BJ (cell line): ENCODE measurements at regions of chr7 and their contacts with region 1.

Region 1: DNA sequence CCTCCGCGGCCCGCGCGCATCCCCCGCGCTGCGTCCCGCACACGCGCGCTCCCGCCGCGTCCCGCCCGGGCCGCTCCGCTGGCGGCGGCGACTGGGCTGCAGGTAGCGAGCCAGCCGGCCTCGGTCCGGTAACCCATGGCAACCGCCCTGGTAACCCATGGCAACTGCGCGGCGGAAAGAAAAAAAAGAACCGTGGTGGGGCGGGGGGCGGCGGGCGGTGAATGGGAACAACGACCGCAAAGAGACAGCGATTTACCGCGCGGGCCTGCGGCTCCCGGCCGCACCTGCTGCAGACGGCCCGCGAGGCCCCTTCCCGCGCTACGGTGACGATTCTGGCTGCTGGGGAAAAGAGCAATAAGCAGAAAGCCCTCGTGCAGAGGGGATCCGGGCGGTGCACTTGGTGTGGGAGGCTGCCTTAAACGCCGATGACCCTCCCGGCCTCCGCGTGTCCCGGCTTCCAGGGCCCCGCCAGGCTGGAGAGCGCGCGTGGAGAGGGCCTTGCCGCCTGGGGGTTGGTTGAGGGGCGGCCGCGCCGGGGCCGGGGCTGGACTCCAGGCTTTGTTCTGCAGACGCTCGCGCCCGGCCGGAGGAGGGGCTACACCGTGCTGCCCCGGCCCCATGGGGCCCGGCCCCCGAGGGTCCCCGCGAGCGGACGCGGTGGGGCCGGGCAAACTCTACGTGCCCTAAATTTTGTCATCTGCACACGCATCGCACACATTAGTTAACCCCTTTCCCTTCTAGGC is 84.7 kb downstream of the SNX10 start:
- DNase-seq: no peak
- H3K4me3 ChIP-seq: no peak overlapping the region
- H3K27me3 ChIP-seq: peaks cover 16% of the 10 kb centered on the region
- CTCF ChIP-seq: no peak

Region 2: GRCh38 chr7:26318921-26319320 is 57.4 kb before region 1 on chr7:
- CTCF ChIA-PET with region 1: no interaction called
- POLR2A ChIA-PET with region 1: no interaction called
- DNase-seq: no peak
- H3K4me3 ChIP-seq: no peak overlapping the region
- H3K27me3 ChIP-seq: no peaks in the 10 kb centered on the region
- CTCF ChIP-seq: no peak

Region 3: DNA sequence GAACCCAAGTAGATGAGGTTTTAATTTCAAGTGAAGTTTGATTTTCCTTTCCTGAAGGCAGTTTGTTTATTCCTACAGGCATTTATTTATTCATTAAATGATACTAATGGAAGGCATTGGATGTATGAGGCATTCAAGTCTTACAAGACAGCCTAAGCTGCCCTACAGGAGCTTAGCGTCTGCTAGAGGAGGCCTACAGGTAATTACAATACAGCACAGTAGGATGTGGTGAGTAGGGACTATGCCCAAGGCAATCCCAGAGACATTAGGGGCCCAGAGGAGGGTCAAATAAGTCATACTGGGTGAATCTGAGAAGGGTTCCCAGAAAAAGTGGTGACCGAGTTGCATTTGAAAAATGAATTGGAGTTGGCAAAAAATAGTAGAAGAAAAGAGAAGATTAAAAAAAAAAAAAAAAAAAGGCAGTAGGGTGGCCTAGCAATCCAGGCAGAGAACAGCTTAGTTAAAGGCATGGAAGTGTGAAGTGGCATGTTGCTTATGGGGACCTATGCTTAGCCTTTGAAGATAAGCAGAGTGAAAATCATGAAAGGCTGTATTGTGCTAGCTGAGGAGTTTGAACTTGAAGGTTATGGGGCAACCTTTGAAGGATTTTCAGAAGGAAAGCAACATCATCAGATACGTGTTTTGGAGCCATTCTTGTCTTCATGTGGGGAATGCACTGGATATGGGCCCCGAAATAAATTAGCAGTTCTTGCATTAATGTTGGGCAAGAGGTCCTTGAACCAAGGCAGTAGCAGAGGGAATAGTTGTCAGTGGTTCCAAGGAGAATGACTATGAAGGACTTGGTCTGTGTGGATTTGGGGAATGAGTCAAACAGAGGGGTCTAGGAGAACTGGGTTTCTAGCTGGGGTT is 19.2 kb before region 1 on chr7:
- CTCF ChIA-PET with region 1: no interaction called
- POLR2A ChIA-PET with region 1: no interaction called
- DNase-seq: no peak
- H3K4me3 ChIP-seq: no peak overlapping the region
- H3K27me3 ChIP-seq: no peaks in the 10 kb centered on the region
- CTCF ChIP-seq: no peak

Region 4: GRCh38 chr7:26667500-26668133 is 291.3 kb after region 1 on chr7:
- CTCF ChIA-PET with region 1: interaction called, 55 read pairs
- POLR2A ChIA-PET with region 1: no interaction called
- DNase-seq: peak; percentile 66
- H3K4me3 ChIP-seq: no peak overlapping the region
- H3K27me3 ChIP-seq: no peaks in the 10 kb centered on the region
- CTCF ChIP-seq: peak; percentile 86